B cell (primary cell): ENCODE measurements at regions of chr11 and their contacts with region 1.

Region 1: GRCh38 chr11:47269002-47269828 is 718 bp upstream of the MADD start:
- DNase-seq: peak; percentile 92
- ATAC-seq: peak; percentile 67
- H3K4me3 ChIP-seq: peak overlapping the region; percentile 58 to 89 (median 84)
- H3K4me3 Mint-ChIP-seq: peak overlapping the region; percentile 89
- H3K27ac ChIP-seq: peak overlapping the region; percentile 90 to 92
- H3K27ac Mint-ChIP-seq: peak overlapping the region; percentile 94
- H3K4me1 ChIP-seq: peaks cover 47 to 48% of the 10 kb centered on the region in 2 donors
- H3K4me1 Mint-ChIP-seq: peaks cover 55% of the 10 kb centered on the region
- H3K27me3 ChIP-seq: no peaks in the 10 kb centered on the region
- H3K27me3 Mint-ChIP-seq: no peaks in the 10 kb centered on the region
- CTCF ChIP-seq: no peak

Region 2: DNA sequence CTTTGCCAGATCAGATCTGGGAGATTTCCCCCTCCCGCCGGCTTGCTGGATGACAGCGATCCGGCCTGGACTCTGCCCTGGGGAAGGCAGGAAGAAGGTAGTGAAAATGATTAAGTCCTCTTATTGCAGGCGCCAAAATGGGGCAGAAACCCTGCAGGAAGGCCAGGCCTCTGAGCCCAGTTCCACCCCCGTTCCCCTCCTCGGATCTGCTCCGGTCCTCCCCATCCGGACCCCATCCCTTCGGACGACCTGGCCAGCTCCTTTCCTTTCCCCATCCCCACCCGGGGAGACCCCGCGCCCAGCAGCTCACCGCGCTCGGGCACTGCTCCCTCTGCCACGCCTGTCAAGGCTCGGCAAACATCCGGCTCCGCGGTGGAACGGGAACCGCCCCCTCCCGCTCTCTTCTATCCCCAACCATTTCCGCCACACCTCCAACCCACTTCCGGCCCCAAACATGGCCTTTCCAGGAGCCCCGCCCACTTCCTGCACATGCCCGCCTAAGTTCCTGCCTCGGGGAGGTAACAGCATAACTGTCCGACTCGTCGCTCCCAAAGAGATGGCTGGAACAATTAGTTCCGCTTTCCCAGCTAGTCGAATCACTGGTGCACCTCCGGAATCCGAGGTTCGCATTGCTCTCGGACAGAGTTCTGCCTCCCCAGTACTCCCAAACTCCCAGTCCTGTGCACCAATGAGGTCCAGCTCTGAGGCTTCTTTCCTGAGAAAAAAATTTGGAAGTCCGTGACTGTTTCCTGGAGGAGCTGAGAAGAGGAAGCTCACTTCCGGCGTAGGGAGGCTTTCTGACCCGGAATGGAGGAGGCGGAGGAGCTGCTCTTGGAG is 568.8 kb before region 1 on chr11 and contains the starts of genes ARHGAP1 and ZNF408:
- CTCF ChIA-PET with region 1: no interaction called
- POLR2A ChIA-PET with region 1: no interaction called
- intact Hi-C with region 1: loop called (anchors 1 kb)
- DNase-seq: peak; percentile 99
- ATAC-seq: peak; percentile 90
- H3K4me3 ChIP-seq: peak within 1 kb of the TSS; percentile 87 to 100 (median 98)
- H3K4me3 Mint-ChIP-seq: peak within 1 kb of the TSS; percentile 96
- H3K27ac ChIP-seq: peak within 1 kb of the TSS; percentile 47 to 86
- H3K27ac Mint-ChIP-seq: peak within 1 kb of the TSS; percentile 93
- H3K4me1 ChIP-seq: peaks cover 30 to 39% of the 10 kb centered on the region in 2 donors
- H3K4me1 Mint-ChIP-seq: peaks cover 43% of the 10 kb centered on the region
- H3K27me3 ChIP-seq: no peaks in the 10 kb centered on the region
- H3K27me3 Mint-ChIP-seq: no peaks in the 10 kb centered on the region
- CTCF ChIP-seq: no peak
- total RNA-seq, gene ARHGAP1: 55.0 and 56.8 TPM in 2 replicates
- total RNA-seq, gene ZNF408: 19.2 and 22.3 TPM in 2 replicates

Region 3: DNA sequence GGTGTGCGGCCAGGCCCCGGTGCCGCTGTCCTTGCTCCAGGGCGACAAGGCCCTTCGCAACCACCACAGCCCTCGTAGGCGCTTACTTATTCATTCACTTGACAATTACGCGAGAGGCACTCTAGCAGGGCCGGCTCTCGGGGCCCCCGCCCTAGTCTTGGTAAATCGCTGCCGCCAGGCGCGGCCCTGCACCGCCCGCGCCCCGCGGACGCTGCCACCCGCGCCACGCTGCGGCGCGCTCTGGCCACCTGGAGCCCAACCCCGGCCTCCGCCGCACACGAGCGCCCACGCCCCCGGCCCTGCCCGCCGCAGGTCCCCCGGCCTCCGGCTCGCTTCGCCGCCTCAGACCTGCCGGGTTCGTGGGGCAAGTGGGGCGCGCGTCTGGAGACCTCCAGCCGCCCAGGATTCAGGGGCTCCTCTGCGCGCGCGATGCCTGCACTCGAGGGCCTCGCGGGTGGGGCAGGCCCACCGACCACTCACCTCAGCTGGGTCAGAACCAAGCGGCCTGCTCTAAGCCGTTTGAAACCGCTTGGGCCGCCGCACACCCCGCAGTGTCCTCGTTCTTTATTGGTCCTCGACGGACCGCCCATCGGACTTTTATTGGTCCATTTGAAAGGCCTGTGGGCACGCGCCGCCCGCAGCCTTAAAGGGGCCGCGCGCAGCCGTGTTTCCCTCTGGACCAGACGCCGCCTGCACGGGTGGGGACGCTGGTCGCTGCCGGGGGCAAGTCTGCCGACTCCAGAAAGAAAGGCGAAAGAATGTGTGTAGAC is 423.3 kb before region 1 on chr11 and contains the start of gene CKAP5:
- CTCF ChIA-PET with region 1: no interaction called
- POLR2A ChIA-PET with region 1: no interaction called
- intact Hi-C with region 1: loop called (anchors 2 kb)
- DNase-seq: peak; percentile 91
- ATAC-seq: peak; percentile 89
- H3K4me3 ChIP-seq: peak within 1 kb of the TSS; percentile 36 to 89 (median 83)
- H3K4me3 Mint-ChIP-seq: peak within 1 kb of the TSS; percentile 97
- H3K27ac ChIP-seq: peak within 1 kb of the TSS; percentile 65 to 67
- H3K27ac Mint-ChIP-seq: peak within 1 kb of the TSS; percentile 97
- H3K4me1 ChIP-seq: peaks cover 12 to 15% of the 10 kb centered on the region in 2 donors
- H3K4me1 Mint-ChIP-seq: peaks cover 31% of the 10 kb centered on the region
- H3K27me3 ChIP-seq: no peaks in the 10 kb centered on the region
- H3K27me3 Mint-ChIP-seq: no peaks in the 10 kb centered on the region
- CTCF ChIP-seq: no peak
- total RNA-seq, gene CKAP5: 49.4 and 54.3 TPM in 2 replicates

Region 4: DNA sequence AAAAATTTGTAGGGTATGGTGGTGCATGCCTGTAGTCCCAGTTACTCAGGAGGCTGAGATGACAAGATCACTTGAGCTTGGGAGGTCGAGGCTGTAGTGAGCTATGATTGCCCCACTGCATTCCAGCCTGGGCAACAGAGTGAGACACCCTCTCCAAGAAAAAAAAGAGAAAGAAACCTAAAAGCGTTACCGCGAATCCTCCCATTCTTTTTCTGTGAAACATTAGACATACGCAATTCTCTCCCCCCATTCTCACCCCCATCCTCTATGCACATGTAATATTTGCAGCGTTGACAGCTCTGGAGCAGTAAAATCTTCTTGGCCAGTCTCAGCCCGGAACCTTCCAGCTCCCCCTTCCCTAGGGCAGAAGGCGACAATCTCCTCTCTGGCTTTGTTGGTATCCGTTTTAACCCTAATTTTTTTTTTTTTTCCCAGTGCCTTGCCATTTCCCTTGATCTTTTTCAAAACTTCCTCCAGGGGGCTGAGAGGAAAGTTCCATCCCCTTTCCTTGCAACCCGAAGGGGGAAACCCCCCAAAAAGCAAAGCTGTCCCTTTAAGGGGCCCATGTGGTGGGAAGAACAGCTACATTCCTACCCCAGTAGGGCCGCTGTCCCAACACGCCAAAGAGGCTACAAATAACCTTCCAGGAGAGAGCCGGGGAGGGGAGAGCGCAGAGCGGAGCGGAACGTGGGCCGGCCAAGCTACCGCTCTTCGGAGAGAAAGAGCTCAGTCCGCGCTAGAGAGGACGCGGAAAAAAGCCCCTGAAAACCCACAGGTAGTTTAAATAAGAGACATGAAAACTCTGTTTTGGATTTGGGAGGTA is 352.7 kb before region 1 on chr11:
- CTCF ChIA-PET with region 1: no interaction called
- POLR2A ChIA-PET with region 1: no interaction called
- intact Hi-C with region 1: no loop called
- DNase-seq: peak; percentile 24
- ATAC-seq: no peak
- H3K4me3 ChIP-seq: peak overlapping the region in 4 of 5 experiments; percentile 14 to 54 (median 50)
- H3K4me3 Mint-ChIP-seq: peak overlapping the region; percentile 86
- H3K27ac ChIP-seq: no peak overlapping the region
- H3K27ac Mint-ChIP-seq: no peak overlapping the region
- H3K4me1 ChIP-seq: peaks cover 28 to 31% of the 10 kb centered on the region in 2 donors
- H3K4me1 Mint-ChIP-seq: peaks cover 30% of the 10 kb centered on the region
- H3K27me3 ChIP-seq: peaks cover 0 to 64% (median 36%) of the 10 kb centered on the region in 4 experiments
- H3K27me3 Mint-ChIP-seq: peaks cover 54% of the 10 kb centered on the region
- CTCF ChIP-seq: no peak

Region 5: GRCh38 chr11:47248664-47249377 is 20.4 kb before region 1 on chr11 and contains the start of gene ACP2:
- CTCF ChIA-PET with region 1: interaction called, 8 read pairs
- POLR2A ChIA-PET with region 1: interaction called, 8 read pairs
- intact Hi-C with region 1: loop called (anchors 1 kb)
- DNase-seq: peak; percentile 94
- ATAC-seq: peak; percentile 94
- H3K4me3 ChIP-seq: peak within 1 kb of the TSS; percentile 65 to 99 (median 90)
- H3K4me3 Mint-ChIP-seq: peak within 1 kb of the TSS; percentile 99
- H3K27ac ChIP-seq: peak within 1 kb of the TSS; percentile 56 to 79
- H3K27ac Mint-ChIP-seq: peak within 1 kb of the TSS; percentile 99
- H3K4me1 ChIP-seq: peaks cover 13 to 22% of the 10 kb centered on the region in 2 donors
- H3K4me1 Mint-ChIP-seq: peaks cover 24% of the 10 kb centered on the region
- H3K27me3 ChIP-seq: no peaks in the 10 kb centered on the region
- H3K27me3 Mint-ChIP-seq: no peaks in the 10 kb centered on the region
- CTCF ChIP-seq: no peak
- total RNA-seq, gene ACP2: 23.5 and 29.5 TPM in 2 replicates

Region 6: GRCh38 chr11:47285969-47286770 is 17.0 kb after region 1 on chr11:
- CTCF ChIA-PET with region 1: no interaction called
- POLR2A ChIA-PET with region 1: no interaction called
- intact Hi-C with region 1: no loop called
- DNase-seq: no peak
- ATAC-seq: no peak
- H3K4me3 ChIP-seq: no peak overlapping the region
- H3K4me3 Mint-ChIP-seq: no peak overlapping the region
- H3K27ac ChIP-seq: no peak overlapping the region
- H3K27ac Mint-ChIP-seq: no peak overlapping the region
- H3K4me1 ChIP-seq: no peaks in the 10 kb centered on the region
- H3K4me1 Mint-ChIP-seq: no peaks in the 10 kb centered on the region
- H3K27me3 ChIP-seq: no peaks in the 10 kb centered on the region
- H3K27me3 Mint-ChIP-seq: no peaks in the 10 kb centered on the region
- CTCF ChIP-seq: no peak

Region 7: DNA sequence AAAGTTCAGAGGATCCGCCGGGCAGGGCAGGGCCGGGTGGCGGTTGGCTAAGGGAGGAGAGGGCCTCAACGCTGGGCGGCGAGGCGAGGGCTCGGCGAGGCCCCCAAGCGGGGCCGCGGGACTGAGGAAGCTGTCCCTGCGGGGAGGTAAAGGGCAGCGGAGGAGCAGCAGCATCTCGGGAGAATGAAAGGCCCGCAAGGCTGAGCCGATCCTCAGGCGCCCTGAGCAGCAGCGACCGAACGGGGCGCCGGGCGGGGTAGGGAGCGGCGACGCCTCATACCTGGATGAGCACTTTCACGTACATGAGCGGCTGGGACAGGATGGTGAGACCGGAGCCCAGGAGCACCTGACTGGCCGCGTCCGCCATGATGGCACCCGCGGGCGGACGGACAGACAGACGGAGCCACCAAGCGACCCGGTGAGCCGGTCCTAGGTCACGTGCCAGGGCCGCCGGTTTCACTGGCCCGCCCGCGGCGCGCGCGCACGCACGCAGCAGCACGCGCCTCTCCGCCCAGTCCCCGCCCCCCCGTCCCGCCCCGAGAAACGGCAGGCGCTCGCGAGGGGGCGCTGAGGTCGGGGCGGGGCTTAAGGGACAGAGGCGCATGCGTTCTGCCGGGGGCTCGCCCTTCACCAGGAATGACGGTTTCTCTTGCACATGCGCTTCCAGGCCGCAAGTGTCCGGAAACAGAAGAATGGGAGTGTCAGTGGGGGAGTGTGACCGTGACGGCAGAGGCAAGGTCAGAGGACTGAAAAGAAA is 373.1 kb after region 1 on chr11 and contains the start of gene MTCH2:
- CTCF ChIA-PET with region 1: no interaction called
- POLR2A ChIA-PET with region 1: no interaction called
- intact Hi-C with region 1: loop called (anchors 1 kb)
- DNase-seq: peak; percentile 99
- ATAC-seq: peak; percentile 94
- H3K4me3 ChIP-seq: peak within 1 kb of the TSS; percentile 79 to 86 (median 79)
- H3K4me3 Mint-ChIP-seq: peak within 1 kb of the TSS; percentile 93
- H3K27ac ChIP-seq: peak within 1 kb of the TSS; percentile 92
- H3K27ac Mint-ChIP-seq: peak within 1 kb of the TSS; percentile 96
- H3K4me1 ChIP-seq: peaks cover 13 to 21% of the 10 kb centered on the region in 2 donors
- H3K4me1 Mint-ChIP-seq: peaks cover 23% of the 10 kb centered on the region
- H3K27me3 ChIP-seq: no peaks in the 10 kb centered on the region
- H3K27me3 Mint-ChIP-seq: no peaks in the 10 kb centered on the region
- CTCF ChIP-seq: peak; percentile 29
- total RNA-seq, gene MTCH2: 26.9 and 30.9 TPM in 2 replicates